Gastrocnemius medialis (tissue), 4 donors: ENCODE measurements at regions of chr22 and their contacts with region 1.

Region 1: GRCh38 chr22:24325105-24325757 is 54.6 kb downstream of the SPECC1L start:
- DNase-seq: no peak
- ATAC-seq: peak; percentile 66 to 79
- H3K4me3 ChIP-seq: no peak overlapping the region
- H3K27ac ChIP-seq: no peak overlapping the region
- H3K4me1 ChIP-seq: no peaks in the 10 kb centered on the region
- H3K27me3 ChIP-seq: no peaks in the 10 kb centered on the region
- CTCF ChIP-seq: peak; percentile 26 to 66 (median 47)
- POLR2A ChIP-seq: no peak

Region 2: GRCh38 chr22:24390576-24390975 is 65.3 kb after region 1 on chr22:
- in situ Hi-C with region 1: no loop called
- intact Hi-C with region 1: no loop called
- DNase-seq: peak in 1 of 2 donors; percentile 67
- ATAC-seq: peak; percentile 70 to 90
- H3K4me3 ChIP-seq: no peak overlapping the region
- H3K27ac ChIP-seq: peak overlapping the region; percentile 52 to 68 (median 60)
- H3K4me1 ChIP-seq: peaks cover 33 to 47% of the 10 kb centered on the region in 2 donors
- H3K27me3 ChIP-seq: no peaks in the 10 kb centered on the region
- CTCF ChIP-seq: no peak
- POLR2A ChIP-seq: no peak

Region 3: DNA sequence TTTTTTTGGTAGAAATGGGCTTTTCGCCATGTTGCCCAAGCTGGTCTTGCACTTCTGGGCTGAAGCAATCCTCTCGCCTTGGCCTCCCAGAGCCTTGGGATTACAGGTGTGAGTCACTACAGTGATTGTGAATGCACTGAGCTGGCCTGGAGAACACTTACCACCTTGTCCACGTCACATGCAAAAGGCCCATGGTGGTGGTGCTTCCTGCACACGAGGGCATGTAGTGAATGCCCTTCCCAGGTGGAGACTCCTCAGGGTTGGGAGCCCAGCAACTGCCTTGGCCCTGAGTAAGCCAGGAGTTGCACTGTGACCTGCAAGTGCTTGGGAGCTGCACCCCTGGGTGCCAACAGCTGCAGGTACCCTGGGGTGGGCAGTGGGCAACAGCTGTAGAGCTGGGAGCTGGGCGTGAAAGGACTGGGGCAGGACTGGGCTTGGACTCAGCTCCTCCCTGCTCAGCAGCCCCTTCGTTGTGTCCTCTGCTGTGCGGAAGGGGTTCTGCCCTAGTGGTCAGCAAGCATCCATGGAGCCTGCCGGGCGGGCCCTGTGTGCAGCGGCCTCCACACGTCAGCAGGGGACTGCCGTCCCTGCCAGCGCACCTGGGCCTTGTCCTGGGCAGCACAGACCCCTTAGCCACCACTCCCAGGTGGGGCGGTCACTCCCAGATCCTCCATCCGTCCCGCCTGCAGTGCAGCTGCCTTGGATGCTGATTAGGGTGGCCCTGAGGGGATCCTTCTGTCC is 92.8 kb after region 1 on chr22:
- in situ Hi-C with region 1: no loop called
- intact Hi-C with region 1: loop called (anchors 5 kb)
- DNase-seq: no peak
- ATAC-seq: no peak
- H3K4me3 ChIP-seq: no peak overlapping the region
- H3K27ac ChIP-seq: no peak overlapping the region
- H3K4me1 ChIP-seq: peaks cover 11 to 13% of the 10 kb centered on the region in 2 donors
- H3K27me3 ChIP-seq: no peaks in the 10 kb centered on the region
- CTCF ChIP-seq: no peak
- POLR2A ChIP-seq: no peak